Dendritic cell treated with granulocyte-macrophage colony-stimulating factor and Interleukin-4, amounts not matched to agents 40 ng/mL and 50 ng/mL, for 4 days (primary cell): ENCODE measurements at regions of chr6 and their contacts with region 1.

Region 1: GRCh38 chr6:105733565-105734162 is 330.8 kb upstream of the PREP start:
- H3K4me3 Mint-ChIP-seq: no peak overlapping the region
- H3K27ac Mint-ChIP-seq: no peak overlapping the region
- H3K4me1 Mint-ChIP-seq: no peaks in the 10 kb centered on the region
- H3K27me3 Mint-ChIP-seq: no peaks in the 10 kb centered on the region

Region 2: DNA sequence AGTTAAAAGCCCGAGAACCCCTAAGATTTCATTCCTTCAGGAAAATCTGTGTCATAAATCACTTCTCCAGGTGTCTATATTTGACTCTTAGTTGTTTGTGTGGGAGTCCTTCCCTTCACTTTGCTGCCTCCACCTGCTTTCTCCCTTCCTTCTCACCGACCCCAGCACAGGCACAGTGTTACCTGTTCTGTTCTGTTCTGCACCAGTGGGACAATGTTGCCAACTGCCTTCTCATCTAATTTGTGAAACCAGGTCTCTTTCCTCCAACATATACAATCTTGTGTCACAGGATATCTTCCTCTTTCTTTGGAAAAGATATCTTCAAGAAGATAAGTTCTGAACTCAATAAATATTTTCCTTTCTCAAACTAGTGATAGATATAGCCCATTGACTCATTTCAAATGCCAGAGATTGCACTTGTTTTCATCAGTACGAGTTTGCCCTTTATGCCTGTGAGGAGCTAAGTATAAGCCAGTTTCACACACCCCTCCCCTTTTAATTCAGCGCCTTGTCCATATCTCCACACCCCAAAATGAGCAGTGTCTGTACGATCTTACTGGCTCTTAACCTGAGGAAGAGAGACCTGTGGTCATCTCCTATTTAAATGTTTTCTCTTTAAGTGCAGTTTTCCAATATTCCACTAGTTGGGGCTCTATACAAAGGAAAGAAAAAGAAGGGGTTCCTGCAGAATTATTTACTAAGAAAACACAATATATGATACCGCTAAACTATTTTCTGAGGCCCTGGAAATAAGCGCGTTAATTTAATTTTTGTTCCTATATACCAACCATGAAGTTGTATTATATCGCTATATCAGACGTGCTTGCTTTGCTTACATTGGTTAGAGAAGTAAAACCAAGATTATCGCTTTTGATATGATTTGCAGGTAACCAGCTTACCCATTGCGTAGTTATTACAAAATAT is 249.2 kb before region 1 on chr6:
- intact Hi-C with region 1: loop called (anchors 5 kb)
- H3K4me3 Mint-ChIP-seq: no peak overlapping the region
- H3K27ac Mint-ChIP-seq: no peak overlapping the region
- H3K4me1 Mint-ChIP-seq: peaks cover 35% of the 10 kb centered on the region
- H3K27me3 Mint-ChIP-seq: no peaks in the 10 kb centered on the region

Region 3: DNA sequence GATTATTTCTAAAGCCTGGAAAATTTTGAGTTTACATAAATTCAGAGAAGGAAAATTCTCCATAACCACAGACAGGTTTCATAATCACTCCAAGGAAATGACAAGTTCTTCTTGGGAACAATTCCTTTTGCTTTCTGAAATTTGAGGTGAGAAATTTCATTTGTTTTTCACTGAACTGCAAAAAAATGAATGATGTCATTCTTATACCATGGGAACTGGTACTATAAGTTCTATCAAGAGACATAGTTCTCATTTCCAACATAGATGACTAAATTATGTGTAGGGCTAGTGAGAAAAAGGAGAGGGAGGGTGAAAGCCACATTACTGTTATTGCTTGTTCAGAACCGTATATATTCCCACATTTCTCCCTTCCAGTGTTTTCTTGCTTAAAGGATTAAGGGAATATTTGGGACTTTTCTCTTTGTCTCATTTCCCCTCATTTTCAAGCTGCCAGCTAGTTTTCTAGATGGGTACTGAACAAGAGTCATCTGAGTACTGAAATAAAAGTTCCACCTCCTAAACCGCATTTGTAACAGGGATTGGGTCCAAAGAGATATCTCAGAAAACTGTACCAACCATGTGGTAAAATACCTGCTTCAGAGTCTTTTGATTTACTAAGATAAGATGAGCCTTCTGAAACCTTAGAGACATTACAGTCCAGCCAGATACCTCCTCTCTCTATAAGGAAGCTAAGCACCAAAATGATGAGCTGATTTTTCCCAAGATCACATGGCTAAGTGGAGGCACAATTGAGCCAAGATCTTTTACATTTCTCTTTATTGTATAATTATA is 208.2 kb after region 1 on chr6:
- intact Hi-C with region 1: loop called (anchors 10 kb)
- H3K4me3 Mint-ChIP-seq: no peak overlapping the region
- H3K27ac Mint-ChIP-seq: peak overlapping the region; percentile 0
- H3K4me1 Mint-ChIP-seq: peaks cover 40% of the 10 kb centered on the region
- H3K27me3 Mint-ChIP-seq: no peaks in the 10 kb centered on the region

Region 4: DNA sequence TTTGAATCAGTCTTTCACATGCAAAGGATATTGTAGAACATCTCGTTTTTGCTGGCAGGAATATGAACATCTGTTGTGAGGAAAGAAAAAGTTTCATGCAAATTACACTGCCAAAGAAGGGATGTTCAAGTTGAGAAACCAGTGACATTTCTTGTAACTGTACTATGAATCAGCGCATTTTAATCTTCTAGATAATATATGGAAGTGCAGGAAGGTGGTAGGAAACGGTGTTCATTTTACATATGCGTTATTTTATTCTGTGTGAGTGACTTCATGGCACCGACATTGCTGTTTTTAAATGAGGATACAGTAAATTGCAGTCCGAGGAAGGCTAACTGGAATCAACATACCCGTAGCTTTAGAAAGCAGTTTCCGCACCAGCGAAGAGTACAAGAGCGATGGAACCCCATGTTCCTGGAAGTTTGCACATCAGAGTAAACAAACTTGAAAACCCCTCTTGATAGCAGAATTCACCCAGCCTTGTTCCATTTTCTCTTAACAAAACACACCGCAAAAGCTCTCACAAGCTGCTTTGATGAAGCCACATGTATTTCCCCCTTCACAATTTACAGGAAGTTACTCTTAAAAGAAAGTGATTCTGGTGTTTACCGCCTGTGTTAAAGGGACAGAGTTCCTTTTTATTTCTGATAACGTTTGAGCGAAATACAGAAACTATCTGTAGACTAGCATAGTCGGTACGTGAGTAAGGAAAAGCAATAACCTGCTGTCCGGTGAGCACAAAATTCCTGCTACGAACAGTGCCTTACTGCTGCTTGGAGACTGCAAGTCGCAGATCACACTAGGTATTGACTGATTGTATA is 364.0 kb after region 1 on chr6:
- intact Hi-C with region 1: loop called (anchors 5 kb)
- H3K4me3 Mint-ChIP-seq: peak overlapping the region; percentile 73
- H3K27ac Mint-ChIP-seq: peak overlapping the region; percentile 87
- H3K4me1 Mint-ChIP-seq: peaks cover 78% of the 10 kb centered on the region
- H3K27me3 Mint-ChIP-seq: no peaks in the 10 kb centered on the region

Region 5: GRCh38 chr6:106128981-106129781 is 395.5 kb after region 1 on chr6:
- intact Hi-C with region 1: no loop called
- H3K4me3 Mint-ChIP-seq: no peak overlapping the region
- H3K27ac Mint-ChIP-seq: no peak overlapping the region
- H3K4me1 Mint-ChIP-seq: peaks cover 26% of the 10 kb centered on the region
- H3K27me3 Mint-ChIP-seq: no peaks in the 10 kb centered on the region

Region 6: DNA sequence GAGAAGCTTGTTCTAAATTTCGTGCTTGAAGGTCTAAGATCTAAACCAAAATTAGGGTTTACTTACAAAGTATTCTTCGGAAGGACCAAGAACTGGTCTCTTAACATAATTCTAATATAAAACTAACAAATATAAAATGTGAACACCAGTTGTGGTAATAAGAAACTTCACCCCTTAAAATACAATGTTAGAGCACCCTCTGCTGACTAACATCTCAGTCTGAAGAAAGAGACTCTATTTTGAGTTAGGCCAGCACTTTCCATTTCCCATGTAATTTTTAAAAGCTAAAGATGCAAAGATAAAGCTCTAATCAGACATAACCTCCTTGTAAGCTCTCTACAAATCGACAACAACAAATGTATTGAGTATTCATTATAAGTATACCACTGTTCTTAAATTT is 567.3 kb after region 1 on chr6:
- intact Hi-C with region 1: loop called (anchors 10 kb)
- H3K4me3 Mint-ChIP-seq: no peak overlapping the region
- H3K27ac Mint-ChIP-seq: no peak overlapping the region
- H3K4me1 Mint-ChIP-seq: no peaks in the 10 kb centered on the region
- H3K27me3 Mint-ChIP-seq: no peaks in the 10 kb centered on the region